ENCODE measurements at regions of chr5 and their contacts with region 1.

Region 1: GRCh38 chr5:175494280-175495183 is 16.2 kb downstream of the SFXN1 start:
- DNase-seq: no peak
- H3K4me3 ChIP-seq: no peak overlapping the region
- CTCF ChIP-seq: no peak

Region 2: DNA sequence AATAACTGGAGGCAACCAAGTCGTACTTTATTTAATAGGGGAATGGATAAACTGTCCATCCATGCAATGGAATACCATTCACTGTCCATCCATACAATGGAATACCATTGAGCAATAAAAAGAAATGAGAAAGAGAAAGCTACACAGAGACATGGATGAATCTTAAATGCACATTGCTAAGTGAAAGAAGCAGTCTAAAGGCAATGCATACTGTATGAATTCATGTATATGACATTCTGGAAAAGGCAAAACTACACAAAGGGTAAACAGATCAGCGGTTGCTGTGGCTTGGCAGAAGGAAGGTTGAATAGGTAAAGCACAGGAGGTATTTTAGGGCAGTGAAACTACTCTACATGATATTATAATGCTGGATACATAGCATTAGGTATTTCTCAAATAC is 66.8 kb before region 1 on chr5:
- in situ Hi-C with region 1: no loop called
- DNase-seq: no peak
- H3K4me3 ChIP-seq: no peak overlapping the region
- CTCF ChIP-seq: no peak

Region 3: GRCh38 chr5:175526691-175527090 is 32.2 kb after region 1 on chr5:
- in situ Hi-C with region 1: loop called (anchors 5 kb)
- DNase-seq: no peak
- H3K4me3 ChIP-seq: no peak overlapping the region
- CTCF ChIP-seq: no peak

Measured in astrocyte of the cerebellum (primary cell).